Activated CD4-positive, alpha-beta T cell treated with anti-CD3 and anti-CD28 coated beads, Interleukin-2, amount 10 ng/mL, durations not matched to agents 24 days and 14 days (primary cell): ENCODE measurements at regions of chr2 and their contacts with region 1.

Region 1: GRCh38 chr2:105344704-105345345 is 7.5 kb downstream of the C2orf49 start:
- DNase-seq: no peak
- H3K4me3 Mint-ChIP-seq: no peak overlapping the region
- H3K27ac Mint-ChIP-seq: no peak overlapping the region
- H3K4me1 Mint-ChIP-seq: peaks cover 2% of the 10 kb centered on the region
- H3K27me3 Mint-ChIP-seq: no peaks in the 10 kb centered on the region

Region 2: DNA sequence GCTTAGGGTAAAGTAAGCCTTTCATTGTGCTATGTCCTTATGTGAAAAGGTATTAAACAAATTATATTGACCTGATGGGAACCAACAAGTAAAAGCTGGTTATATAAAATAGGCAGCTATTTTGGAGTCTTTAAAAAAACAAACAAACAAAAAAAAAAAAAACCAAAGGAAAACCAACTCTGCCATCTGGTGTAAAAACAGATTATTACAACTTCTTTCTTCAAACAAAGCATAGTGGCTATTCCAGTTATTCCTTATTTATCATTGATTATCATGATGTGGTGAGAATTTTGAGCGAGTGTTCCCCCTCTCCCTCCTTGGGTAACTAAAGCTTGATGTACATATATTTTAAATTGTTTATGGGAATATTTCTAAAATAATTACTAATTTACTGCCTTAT is 176.4 kb after region 1 on chr2:
- intact Hi-C with region 1: loop called (anchors 1 kb)
- DNase-seq: no peak
- H3K4me3 Mint-ChIP-seq: no peak overlapping the region
- H3K27ac Mint-ChIP-seq: no peak overlapping the region
- H3K4me1 Mint-ChIP-seq: no peaks in the 10 kb centered on the region
- H3K27me3 Mint-ChIP-seq: no peaks in the 10 kb centered on the region